PC-9 (cell line): ENCODE measurements at regions of chr17 and their contacts with region 1.

Region 1: GRCh38 chr17:43360739-43361505 is 37.9 kb upstream of the ARL4D start:
- DNase-seq: peak; percentile 88 to 99
- H3K4me3 ChIP-seq: peak overlapping the region; percentile 64
- H3K27ac ChIP-seq: peak overlapping the region; percentile 92
- H3K4me1 ChIP-seq: peaks cover 44% of the 10 kb centered on the region
- H3K27me3 ChIP-seq: no peaks in the 10 kb centered on the region
- CTCF ChIP-seq: no peak

Region 2: DNA sequence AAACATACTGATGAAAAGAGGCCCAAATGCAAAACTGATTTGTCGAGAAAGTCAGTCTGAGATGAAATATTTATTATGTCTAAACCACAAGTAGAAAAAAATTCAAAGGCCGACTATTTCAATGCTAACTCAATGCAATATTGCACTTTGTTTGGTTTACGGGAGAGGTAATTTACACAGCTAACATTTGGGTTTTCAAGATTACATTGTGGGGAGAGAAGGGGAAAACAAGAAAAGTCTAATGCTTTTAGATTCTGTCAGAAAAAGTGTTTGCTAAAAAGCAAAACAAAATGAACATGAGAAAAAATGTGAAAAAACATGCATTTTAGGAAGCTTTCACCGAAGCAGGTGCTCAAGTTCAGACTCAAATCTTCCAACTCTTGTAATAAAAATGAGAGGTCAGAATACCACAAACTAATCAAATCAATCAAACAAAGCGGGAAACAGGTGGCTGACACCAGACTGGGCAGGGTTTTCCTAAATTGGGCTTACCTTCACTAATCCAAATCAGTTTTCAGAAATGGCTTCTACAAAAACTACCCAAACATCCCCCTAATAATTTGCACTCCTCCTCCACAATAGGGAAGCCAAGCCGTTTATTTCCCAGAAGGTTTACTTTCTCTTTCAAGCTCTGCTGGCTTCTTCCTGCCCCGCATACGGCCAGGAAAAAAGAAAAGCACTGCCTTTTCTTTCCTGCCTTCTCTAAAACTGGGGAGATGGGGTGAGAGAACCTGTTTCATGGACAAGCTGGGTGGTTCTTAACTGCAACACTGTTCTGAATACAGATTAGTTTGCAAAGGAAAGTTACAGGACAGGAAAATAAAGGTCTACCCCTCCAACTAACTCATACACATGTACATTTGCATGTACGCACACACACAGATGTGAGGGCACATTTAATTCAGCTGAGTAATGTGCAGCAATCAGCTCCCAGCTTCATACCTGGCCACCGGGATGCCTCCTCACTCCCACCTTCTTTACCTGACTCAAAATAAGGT is 982.0 kb before region 1 on chr17:
- CTCF ChIA-PET with region 1: no interaction called
- POLR2A ChIA-PET with region 1: interaction called, 12 read pairs
- intact Hi-C with region 1: no loop called
- DNase-seq: no peak
- H3K4me3 ChIP-seq: no peak overlapping the region
- H3K27ac ChIP-seq: no peak overlapping the region
- H3K4me1 ChIP-seq: no peaks in the 10 kb centered on the region
- H3K27me3 ChIP-seq: no peaks in the 10 kb centered on the region
- CTCF ChIP-seq: no peak

Region 3: DNA sequence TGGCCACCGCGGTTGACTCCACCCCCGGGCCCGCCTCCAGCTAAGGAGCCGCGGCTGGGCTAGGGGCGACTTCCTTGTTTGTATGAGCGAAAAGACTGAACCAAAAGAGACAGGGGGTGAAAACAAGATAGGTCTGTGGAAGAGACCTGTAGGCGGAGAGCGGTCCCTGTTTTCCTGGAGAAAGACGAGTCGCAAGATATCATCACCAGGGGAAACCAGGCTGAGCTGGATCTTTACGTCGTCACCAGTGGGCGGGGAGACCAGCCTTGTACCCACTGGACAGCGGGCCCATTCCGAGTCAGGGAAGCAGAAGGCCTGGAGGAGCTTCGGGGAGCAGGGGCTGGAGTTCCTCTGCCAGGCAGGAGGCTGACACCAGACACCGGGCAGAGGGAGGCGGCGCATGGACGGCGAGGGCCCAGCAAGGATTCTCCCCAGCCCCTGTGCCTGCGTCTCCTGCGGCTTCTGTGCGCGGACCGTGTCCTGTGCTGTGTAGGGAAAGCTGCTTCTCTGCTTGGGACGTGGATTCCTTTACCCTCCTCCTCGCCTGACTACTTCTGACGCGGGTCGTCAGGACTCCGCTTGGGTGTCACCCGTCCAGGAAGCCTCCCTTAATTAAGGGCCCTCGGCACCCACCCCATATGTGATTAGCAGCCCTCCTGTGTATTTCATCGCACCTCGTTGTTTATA is 27.6 kb after region 1 on chr17:
- CTCF ChIA-PET with region 1: no interaction called
- POLR2A ChIA-PET with region 1: interaction called, 39 read pairs
- intact Hi-C with region 1: loop called (anchors 1 kb)
- DNase-seq: peak; percentile 84 to 91
- H3K4me3 ChIP-seq: peak overlapping the region; percentile 94
- H3K27ac ChIP-seq: peak overlapping the region; percentile 91
- H3K4me1 ChIP-seq: peaks cover 17% of the 10 kb centered on the region
- H3K27me3 ChIP-seq: no peaks in the 10 kb centered on the region
- CTCF ChIP-seq: no peak

Region 4: DNA sequence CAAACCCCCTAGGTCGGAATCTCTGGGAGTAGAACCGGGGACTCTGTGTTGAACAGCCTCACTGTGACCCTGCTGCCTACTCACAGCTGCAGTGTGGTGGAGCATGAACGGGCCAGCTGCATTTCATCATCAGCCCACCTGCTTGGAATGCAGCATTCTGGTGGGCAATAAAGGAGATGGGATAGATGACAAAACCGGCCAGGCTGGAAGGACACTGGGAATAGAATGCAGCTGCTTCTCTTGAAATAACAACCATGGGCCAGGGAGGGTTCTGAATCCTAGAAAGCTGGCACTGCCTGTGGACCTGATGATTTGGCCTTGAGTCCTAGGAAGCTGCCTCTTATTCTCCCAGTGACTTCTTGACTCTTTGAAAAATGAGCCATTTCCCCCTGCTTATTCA is 442.8 kb after region 1 on chr17:
- CTCF ChIA-PET with region 1: no interaction called
- POLR2A ChIA-PET with region 1: interaction called, 13 read pairs
- intact Hi-C with region 1: no loop called
- DNase-seq: no peak
- H3K4me3 ChIP-seq: no peak overlapping the region
- H3K27ac ChIP-seq: no peak overlapping the region
- H3K4me1 ChIP-seq: no peaks in the 10 kb centered on the region
- H3K27me3 ChIP-seq: no peaks in the 10 kb centered on the region
- CTCF ChIP-seq: no peak